WTC11 (cell line): ENCODE measurements at regions of chr16 and their contacts with region 1.

Region 1: DNA sequence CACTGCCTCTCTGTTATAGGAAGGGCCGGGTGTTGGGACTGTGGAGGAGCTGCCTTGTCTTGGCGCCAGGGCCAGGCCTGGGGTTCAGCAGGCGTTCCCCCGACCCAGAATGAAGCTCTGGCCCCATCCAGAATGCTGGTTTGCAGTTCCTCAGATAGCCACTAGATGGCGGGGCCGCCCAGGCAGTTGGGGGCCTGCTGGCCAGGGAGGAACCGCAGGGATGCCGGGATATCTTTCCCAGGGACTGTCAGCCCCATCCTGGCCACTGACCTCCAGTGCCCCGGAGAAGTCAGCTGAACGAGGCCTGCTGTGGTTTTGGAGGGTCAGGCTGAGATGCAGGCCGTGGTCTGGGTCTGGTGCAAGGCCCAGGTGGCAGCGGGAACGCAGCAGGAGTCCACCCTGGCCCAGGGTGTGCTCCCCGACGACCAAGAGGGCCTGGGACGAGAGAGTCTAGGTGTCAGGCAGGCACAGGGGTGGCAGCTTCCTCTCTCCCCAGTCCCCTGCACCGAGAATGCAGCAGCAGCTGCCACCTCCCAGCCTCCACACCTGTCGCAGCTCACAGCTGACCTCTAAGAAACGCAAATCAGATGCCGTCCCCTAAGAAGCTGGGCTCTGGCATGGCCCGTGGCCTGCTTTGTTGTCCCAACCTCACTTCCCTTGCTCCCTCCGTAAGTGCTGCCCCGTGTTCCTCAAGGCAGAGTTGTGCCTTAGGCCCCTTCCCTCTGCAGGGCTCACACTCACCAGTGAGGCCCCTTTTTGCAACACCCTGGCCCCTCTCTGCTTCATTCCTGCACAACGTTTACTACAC is 51.2 kb downstream of the RMI2 start:
- DNase-seq: peak; percentile 93
- ATAC-seq: peak; percentile 80
- H3K4me3 Mint-ChIP-seq: no peak overlapping the region
- H3K27ac Mint-ChIP-seq: peak overlapping the region; percentile 41; the same call in 1 of the 2 replicates
- H3K4me1 Mint-ChIP-seq: peaks cover 8% of the 10 kb centered on the region; the same call in 1 of the 2 replicates
- H3K27me3 Mint-ChIP-seq: no peaks in the 10 kb centered on the region
- CTCF ChIP-seq: peak; percentile 100

Region 2: DNA sequence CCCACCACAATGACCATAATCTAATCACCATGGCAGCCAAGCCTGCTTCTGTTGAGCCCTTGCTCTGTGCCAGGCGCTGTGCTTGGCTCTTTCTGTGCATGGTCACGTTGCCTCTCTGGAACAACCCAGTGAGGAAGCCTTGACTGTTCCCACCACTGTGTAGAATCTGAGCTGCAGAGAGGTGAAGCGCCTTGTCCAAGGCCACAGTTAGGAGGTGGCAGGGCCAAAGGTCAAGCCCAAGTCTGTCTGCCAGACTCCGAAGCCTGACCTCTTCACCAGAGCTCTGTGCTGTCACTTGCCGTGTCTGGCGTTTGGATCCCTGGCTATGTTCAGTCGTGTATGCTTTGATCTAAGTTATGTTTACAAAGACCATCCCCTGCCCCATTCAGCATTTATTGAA is 441.5 kb before region 1 on chr16:
- CTCF ChIA-PET with region 1: interaction called, 11 read pairs
- POLR2A ChIA-PET with region 1: no interaction called
- DNase-seq: no peak
- ATAC-seq: no peak
- H3K4me3 Mint-ChIP-seq: no peak overlapping the region
- H3K27ac Mint-ChIP-seq: no peak overlapping the region
- H3K4me1 Mint-ChIP-seq: peaks cover 24% of the 10 kb centered on the region
- H3K27me3 Mint-ChIP-seq: no peaks in the 10 kb centered on the region
- CTCF ChIP-seq: no peak

Region 3: GRCh38 chr16:11312718-11313492 is 83.5 kb before region 1 on chr16:
- CTCF ChIA-PET with region 1: no interaction called
- POLR2A ChIA-PET with region 1: no interaction called
- DNase-seq: peak; percentile 53
- ATAC-seq: peak; percentile 3; the same call in 1 of the 2 replicates
- H3K4me3 Mint-ChIP-seq: peak overlapping the region; percentile 50
- H3K27ac Mint-ChIP-seq: peak overlapping the region; percentile 98
- H3K4me1 Mint-ChIP-seq: peaks cover 71% of the 10 kb centered on the region
- H3K27me3 Mint-ChIP-seq: no peaks in the 10 kb centered on the region
- CTCF ChIP-seq: no peak

Region 4: GRCh38 chr16:11407047-11407982 is 10.9 kb after region 1 on chr16:
- CTCF ChIA-PET with region 1: interaction called, 234 read pairs
- POLR2A ChIA-PET with region 1: interaction called, 3 read pairs
- DNase-seq: peak; percentile 76
- ATAC-seq: peak; percentile 63
- H3K4me3 Mint-ChIP-seq: no peak overlapping the region
- H3K27ac Mint-ChIP-seq: no peak overlapping the region
- H3K4me1 Mint-ChIP-seq: no peaks in the 10 kb centered on the region; the same call in 1 of the 2 replicates
- H3K27me3 Mint-ChIP-seq: no peaks in the 10 kb centered on the region
- CTCF ChIP-seq: peak; percentile 70

Region 5: GRCh38 chr16:11530171-11530940 is 133.9 kb after region 1 on chr16:
- CTCF ChIA-PET with region 1: interaction called, 19 read pairs
- POLR2A ChIA-PET with region 1: no interaction called
- DNase-seq: no peak
- ATAC-seq: no peak
- H3K4me3 Mint-ChIP-seq: no peak overlapping the region
- H3K27ac Mint-ChIP-seq: peak overlapping the region; percentile 55; the same call in 1 of the 2 replicates
- H3K4me1 Mint-ChIP-seq: peaks cover 13% of the 10 kb centered on the region; the same call in 1 of the 2 replicates
- H3K27me3 Mint-ChIP-seq: no peaks in the 10 kb centered on the region
- CTCF ChIP-seq: no peak

Region 6: DNA sequence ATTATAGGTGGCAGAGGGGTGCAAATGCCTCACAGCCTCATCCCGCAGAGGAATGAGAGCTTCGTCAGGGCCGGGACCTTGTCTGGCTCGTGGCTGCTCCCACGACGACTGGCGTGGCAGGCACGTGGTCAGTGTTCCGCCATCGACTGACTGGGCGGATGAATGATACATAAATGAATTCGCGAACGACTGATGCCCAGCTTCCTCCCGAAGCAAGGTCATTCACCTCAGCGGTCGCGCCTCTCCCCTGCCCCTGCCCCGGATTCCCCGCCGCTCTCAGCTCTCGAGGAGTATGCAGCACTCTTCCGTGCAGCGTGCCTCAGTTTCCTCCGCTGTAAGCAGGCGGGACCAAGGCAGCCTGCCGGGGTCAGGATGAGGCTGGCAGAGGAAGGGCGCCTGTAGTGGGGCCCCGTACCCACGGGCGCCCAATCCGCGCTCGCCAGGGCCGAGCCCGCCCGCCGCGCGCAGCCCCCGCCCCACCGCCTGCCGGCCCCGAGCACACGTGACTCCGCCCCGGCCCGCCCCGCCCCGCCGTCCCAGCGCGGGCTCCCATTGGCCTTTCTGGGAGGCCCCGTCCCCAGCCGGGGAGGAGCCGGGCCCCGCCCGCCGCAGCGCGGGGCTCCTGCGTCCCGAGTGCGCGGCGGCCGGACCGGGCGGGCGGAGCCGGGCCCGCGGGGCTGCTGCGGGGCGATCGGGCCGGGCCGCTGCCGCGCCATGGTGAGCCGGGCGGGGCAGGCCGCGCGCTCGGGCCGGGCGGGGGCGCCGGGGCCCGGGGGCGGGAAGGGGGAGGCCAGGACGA is 271.6 kb after region 1 on chr16 and contains the start of gene SNN:
- CTCF ChIA-PET with region 1: interaction called, 13 read pairs
- POLR2A ChIA-PET with region 1: no interaction called
- DNase-seq: peak; percentile 85
- ATAC-seq: peak; percentile 81
- H3K4me3 Mint-ChIP-seq: peak within 1 kb of the TSS; percentile 70
- H3K27ac Mint-ChIP-seq: no peak within 1 kb of the TSS
- H3K4me1 Mint-ChIP-seq: peaks cover 66% of the 10 kb centered on the region
- H3K27me3 Mint-ChIP-seq: peaks cover 3% of the 10 kb centered on the region; the same call in 1 of the 2 replicates
- CTCF ChIP-seq: no peak
- total RNA-seq, gene SNN: 54.2 to 65.2 TPM (median 56.2 TPM) in 3 replicates

Region 7: DNA sequence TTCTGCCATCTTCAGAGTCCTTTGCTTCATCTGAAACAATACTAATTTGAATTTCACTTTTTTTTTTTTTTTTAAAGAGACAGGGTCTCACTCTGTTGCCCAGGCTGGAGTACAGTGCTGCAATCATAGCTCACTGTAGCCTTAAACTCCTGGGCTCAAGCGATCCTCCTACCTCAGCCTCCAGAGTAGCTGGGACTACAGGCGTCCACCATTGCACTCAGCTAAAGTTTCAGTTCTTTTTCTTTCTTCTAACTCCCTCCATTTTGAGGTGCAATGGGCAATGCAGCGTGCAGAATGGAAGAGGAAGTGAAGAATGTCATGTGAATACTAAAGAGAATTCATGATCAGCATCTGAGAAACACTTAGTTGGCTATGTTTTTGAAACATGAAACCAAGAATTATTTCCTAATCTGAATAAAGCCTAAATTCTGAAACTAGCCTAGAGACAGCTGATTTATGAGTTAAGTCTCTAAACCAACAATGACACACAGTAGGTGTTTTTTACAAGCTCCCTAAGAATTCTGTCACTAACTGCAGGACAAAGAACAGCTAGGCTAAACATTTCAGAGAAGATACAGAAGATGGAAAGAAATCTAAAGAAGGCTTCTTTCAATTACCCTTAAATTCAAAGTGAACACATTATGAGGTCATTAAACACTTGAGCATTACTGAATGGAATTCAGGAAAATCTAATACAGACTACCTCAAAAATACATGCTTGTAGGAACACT is 292.8 kb after region 1 on chr16:
- CTCF ChIA-PET with region 1: interaction called, 14 read pairs
- POLR2A ChIA-PET with region 1: no interaction called
- DNase-seq: no peak
- ATAC-seq: no peak
- H3K4me3 Mint-ChIP-seq: no peak overlapping the region
- H3K27ac Mint-ChIP-seq: no peak overlapping the region
- H3K4me1 Mint-ChIP-seq: no peaks in the 10 kb centered on the region
- H3K27me3 Mint-ChIP-seq: no peaks in the 10 kb centered on the region
- CTCF ChIP-seq: no peak